H1 (cell line): ENCODE measurements at regions of chr22 and their contacts with region 1.

Region 1: GRCh38 chr22:34975721-34976120 is 90.2 kb upstream of the ISX start:
- DNase-seq: no peak
- H3K4me3 ChIP-seq: no peak overlapping the region
- H3K27ac ChIP-seq: no peak overlapping the region
- H3K4me1 ChIP-seq: peaks cover 0 to 17% (median 7%) of the 10 kb centered on the region in 4 experiments; a peak in 6 of 7 replicates
- H3K27me3 ChIP-seq: no peaks in the 10 kb centered on the region
- CTCF ChIP-seq: peak in 2 of 3 experiments; percentile 42 to 67; a peak in 3 of 4 replicates
- EP300 ChIP-seq: no peak
- POLR2A ChIP-seq: no peak
- RAD21 ChIP-seq: peak; percentile 52 to 65

Region 2: DNA sequence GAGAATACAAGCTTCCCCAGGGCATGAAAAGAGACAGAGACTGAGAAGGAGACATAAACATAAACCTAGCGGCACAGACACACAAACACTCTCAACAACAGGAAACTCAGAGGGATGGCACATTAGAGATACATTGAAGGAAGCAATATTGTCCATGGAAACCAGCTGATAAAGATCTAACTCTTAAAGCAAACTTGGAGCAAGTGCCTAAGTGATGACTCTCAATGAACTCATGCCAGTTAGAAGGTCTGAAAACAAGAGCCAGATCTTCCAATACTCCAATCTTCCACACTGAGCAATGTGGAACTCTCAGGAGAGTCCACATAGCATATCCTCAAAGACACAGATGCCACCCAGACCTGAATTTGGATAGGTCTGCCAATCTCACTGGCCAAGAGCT is 78.6 kb before region 1 on chr22:
- CTCF ChIA-PET with region 1: no interaction called
- POLR2A ChIA-PET with region 1: no interaction called
- DNase-seq: no peak
- H3K4me3 ChIP-seq: no peak overlapping the region
- H3K27ac ChIP-seq: no peak overlapping the region
- H3K4me1 ChIP-seq: no peaks in the 10 kb centered on the region
- H3K27me3 ChIP-seq: no peaks in the 10 kb centered on the region; a peak in 1 of 7 replicates
- CTCF ChIP-seq: no peak
- EP300 ChIP-seq: no peak
- POLR2A ChIP-seq: no peak
- RAD21 ChIP-seq: no peak

Region 3: DNA sequence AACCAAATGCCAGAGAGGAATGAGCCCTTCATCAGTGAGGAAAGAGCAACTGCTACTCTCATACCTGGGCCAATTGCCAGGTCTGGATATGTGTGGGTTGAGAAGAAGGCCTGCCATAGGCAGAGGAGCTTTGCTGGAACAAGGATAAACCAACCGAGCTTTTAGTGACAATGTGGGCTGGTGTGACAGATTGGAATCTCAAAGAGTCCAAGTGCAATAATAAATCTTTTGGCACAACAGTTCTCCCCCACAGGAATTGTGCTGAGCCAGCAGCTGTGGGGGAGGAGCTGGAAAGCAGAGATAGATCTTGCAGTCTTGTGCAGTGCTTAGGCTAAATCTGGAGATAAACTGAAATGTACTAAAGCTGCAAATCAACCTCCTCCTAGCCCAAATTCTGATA is 10.8 kb after region 1 on chr22:
- CTCF ChIA-PET with region 1: interaction called, 17 read pairs
- POLR2A ChIA-PET with region 1: no interaction called
- DNase-seq: no peak
- H3K4me3 ChIP-seq: no peak overlapping the region
- H3K27ac ChIP-seq: no peak overlapping the region
- H3K4me1 ChIP-seq: peaks cover 0 to 4% (median 2%) of the 10 kb centered on the region in 4 experiments; a peak in 2 of 7 replicates
- H3K27me3 ChIP-seq: no peaks in the 10 kb centered on the region
- CTCF ChIP-seq: no peak
- EP300 ChIP-seq: no peak
- POLR2A ChIP-seq: no peak
- RAD21 ChIP-seq: no peak

Region 4: DNA sequence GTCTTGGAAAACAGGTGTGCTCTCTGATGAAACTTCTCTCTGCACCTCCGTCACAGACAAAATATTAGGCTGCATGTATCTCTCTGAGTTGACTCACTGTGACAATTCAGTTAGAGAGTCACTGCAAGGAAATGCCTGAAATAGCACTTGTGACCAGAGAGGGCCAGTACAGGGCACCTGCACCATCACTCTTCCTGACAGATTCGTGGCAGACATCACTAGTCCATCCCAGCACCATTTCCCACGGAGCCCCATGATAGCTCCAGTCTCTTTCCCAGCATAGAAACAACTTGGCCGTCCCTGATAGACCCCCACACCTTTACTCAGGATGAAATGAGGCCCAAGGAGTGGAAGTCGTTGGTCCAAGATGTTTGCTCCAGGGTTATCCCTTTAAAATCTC is 17.0 kb after region 1 on chr22:
- CTCF ChIA-PET with region 1: interaction called, 17 read pairs
- POLR2A ChIA-PET with region 1: no interaction called
- DNase-seq: no peak
- H3K4me3 ChIP-seq: no peak overlapping the region
- H3K27ac ChIP-seq: no peak overlapping the region
- H3K4me1 ChIP-seq: no peaks in the 10 kb centered on the region
- H3K27me3 ChIP-seq: no peaks in the 10 kb centered on the region
- CTCF ChIP-seq: peak in 1 of 3 experiments; percentile 11; a peak in 1 of 4 replicates
- EP300 ChIP-seq: no peak
- POLR2A ChIP-seq: no peak
- RAD21 ChIP-seq: peak in 1 of 2 experiments; percentile 5; a peak in 1 of 4 replicates

Region 5: GRCh38 chr22:35523167-35523947 is 547.6 kb after region 1 on chr22:
- CTCF ChIA-PET with region 1: no interaction called
- POLR2A ChIA-PET with region 1: no interaction called
- DNase-seq: no peak
- H3K4me3 ChIP-seq: no peak overlapping the region
- H3K27ac ChIP-seq: no peak overlapping the region
- H3K4me1 ChIP-seq: peaks cover 0 to 11% (median 4%) of the 10 kb centered on the region in 4 experiments; a peak in 5 of 7 replicates
- H3K27me3 ChIP-seq: no peaks in the 10 kb centered on the region; a peak in 1 of 7 replicates
- CTCF ChIP-seq: no peak
- EP300 ChIP-seq: no peak
- POLR2A ChIP-seq: no peak
- RAD21 ChIP-seq: no peak